Tibial artery (tissue), 4 donors: ENCODE measurements at regions of chr3 and their contacts with region 1.

Region 1: DNA sequence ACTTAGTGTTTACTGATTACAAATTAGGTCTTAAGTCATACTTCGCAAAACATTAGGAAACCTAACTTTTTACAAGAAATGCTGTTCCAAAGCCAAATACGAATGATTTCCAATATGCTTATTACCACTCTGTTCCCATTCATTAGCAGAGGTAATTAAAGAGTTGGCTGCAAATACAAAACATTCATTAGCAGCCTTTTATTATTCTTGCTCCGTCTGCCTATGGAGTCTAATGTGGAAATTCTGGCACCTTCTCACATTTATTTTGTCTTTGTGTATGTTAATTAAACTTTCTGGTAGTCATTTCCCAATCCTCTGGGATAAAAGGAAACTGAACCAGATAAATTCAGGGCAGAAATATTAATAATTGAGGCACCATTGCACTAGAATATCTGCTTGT is 689.0 kb downstream of the PLOD2 start:
- DNase-seq: no peak
- H3K4me3 ChIP-seq: no peak overlapping the region
- H3K27ac ChIP-seq: no peak overlapping the region
- H3K4me1 ChIP-seq: no peaks in the 10 kb centered on the region
- H3K27me3 ChIP-seq: no peaks in the 10 kb centered on the region
- CTCF ChIP-seq: no peak

Region 2: DNA sequence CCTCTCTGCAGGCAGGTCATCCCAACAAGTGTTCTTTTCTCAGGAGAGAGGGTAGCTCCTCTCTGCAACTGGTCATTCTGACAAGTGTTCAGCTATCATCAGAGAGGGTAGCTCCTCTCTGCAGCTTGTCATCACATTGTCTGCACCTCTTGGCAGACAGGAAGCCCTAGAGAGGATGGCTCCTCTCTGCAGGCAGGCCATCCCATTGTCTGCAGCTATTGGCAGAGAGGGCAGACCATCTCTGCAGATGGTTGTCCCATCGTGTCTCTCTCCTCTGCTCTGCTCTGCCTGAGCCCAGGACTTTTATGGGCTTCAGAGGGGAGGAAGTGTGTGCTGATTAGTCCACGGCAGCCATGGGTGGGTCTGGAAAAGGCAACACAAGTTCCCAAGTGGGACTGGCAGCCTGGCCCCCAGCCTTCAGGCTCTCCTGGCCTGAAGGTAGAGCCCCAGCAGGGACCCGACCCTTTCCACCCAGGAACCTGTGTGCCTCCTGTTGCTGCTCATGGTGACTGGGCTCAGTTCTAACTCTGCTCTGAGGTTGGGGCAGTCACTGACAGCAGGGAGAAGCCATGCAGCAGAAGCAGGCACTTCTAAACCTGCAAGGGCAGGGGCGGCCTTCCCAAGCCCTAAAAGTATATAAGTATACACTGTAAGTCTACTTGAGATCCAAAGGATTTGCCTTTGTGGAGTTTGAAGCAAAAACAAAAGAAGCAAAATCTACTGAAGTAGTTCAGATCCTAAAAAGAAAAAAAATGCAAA is 51.1 kb after region 1 on chr3:
- intact Hi-C with region 1: loop called (anchors 2 kb)
- DNase-seq: peak in 1 of 2 donors; percentile 57
- H3K4me3 ChIP-seq: no peak overlapping the region
- H3K27ac ChIP-seq: no peak overlapping the region
- H3K4me1 ChIP-seq: no peaks in the 10 kb centered on the region
- H3K27me3 ChIP-seq: no peaks in the 10 kb centered on the region
- CTCF ChIP-seq: no peak